Colonic mucosa (tissue), 4 donors: ENCODE measurements at regions of chr9 and their contacts with region 1.

Region 1: DNA sequence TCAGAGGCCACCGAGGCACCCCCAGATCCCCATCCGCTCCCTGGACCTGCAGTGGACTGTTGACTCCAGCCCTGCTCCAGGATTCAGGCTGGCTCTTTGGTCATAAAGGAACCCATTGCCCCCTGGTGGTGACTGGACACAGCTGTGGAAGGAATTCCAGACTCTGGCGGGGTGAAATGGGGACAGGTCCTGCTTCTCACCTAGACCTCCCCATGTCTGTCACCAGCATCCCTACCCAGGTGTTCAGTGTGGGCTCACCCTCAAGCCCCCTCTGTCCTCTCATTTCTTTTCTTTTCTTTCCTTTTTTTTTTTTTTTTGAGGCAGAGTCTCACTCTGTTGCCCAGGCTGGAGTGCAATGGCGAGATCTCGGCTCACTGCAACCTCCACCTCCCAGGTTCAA is 25.5 kb upstream of the STXBP1 start:
- DNase-seq: peak; percentile 89
- H3K4me3 ChIP-seq: no peak overlapping the region
- H3K27ac ChIP-seq: no peak overlapping the region
- H3K4me1 ChIP-seq: peaks cover 3% of the 10 kb centered on the region
- H3K27me3 ChIP-seq: no peaks in the 10 kb centered on the region
- CTCF ChIP-seq: peak; percentile 85

Region 2: GRCh38 chr9:127503947-127504782 is 82.4 kb before region 1 on chr9:
- intact Hi-C with region 1: loop called (anchors 2 kb)
- DNase-seq: peak; percentile 84
- H3K4me3 ChIP-seq: no peak overlapping the region
- H3K27ac ChIP-seq: no peak overlapping the region
- H3K4me1 ChIP-seq: no peaks in the 10 kb centered on the region
- H3K27me3 ChIP-seq: no peaks in the 10 kb centered on the region
- CTCF ChIP-seq: peak; percentile 86

Region 3: GRCh38 chr9:127519301-127520166 is 67.0 kb before region 1 on chr9:
- intact Hi-C with region 1: no loop called
- DNase-seq: peak; percentile 15
- H3K4me3 ChIP-seq: no peak overlapping the region
- H3K27ac ChIP-seq: peak overlapping the region; percentile 27
- H3K4me1 ChIP-seq: peaks cover 12% of the 10 kb centered on the region
- H3K27me3 ChIP-seq: no peaks in the 10 kb centered on the region
- CTCF ChIP-seq: no peak

Region 4: GRCh38 chr9:127637322-127637847 is 50.8 kb after region 1 on chr9:
- intact Hi-C with region 1: no loop called
- DNase-seq: peak; percentile 64
- H3K4me3 ChIP-seq: no peak overlapping the region
- H3K27ac ChIP-seq: peak overlapping the region; percentile 29
- H3K4me1 ChIP-seq: peaks cover 9% of the 10 kb centered on the region
- H3K27me3 ChIP-seq: no peaks in the 10 kb centered on the region
- CTCF ChIP-seq: no peak